ENCODE measurements at regions of chr17 and their contacts with region 1.

Region 1: GRCh38 chr17:66983414-66984021 is 19.0 kb downstream of the CACNG4 start:
- DNase-seq: no peak

Region 2: GRCh38 chr17:67025935-67026767 is 42.6 kb after region 1 on chr17:
- intact Hi-C with region 1: loop called in 1 of 2 experiments (anchors 1 kb)
- DNase-seq: no peak